Spleen (tissue), 13 donors: ENCODE measurements at regions of chr11 and their contacts with region 1.

Region 1: GRCh38 chr11:12485328-12485727 is 108.0 kb downstream of the PARVA start:
- DNase-seq: no peak
- H3K4me3 ChIP-seq: no peak overlapping the region
- H3K27ac ChIP-seq: no peak overlapping the region
- H3K4me1 ChIP-seq: no peaks in the 10 kb centered on the region
- H3K27me3 ChIP-seq: no peaks in the 10 kb centered on the region
- CTCF ChIP-seq: peak in 1 of 11 experiments; percentile 23
- POLR2A ChIP-seq: no peak

Region 2: GRCh38 chr11:11966826-11967668 is 518.3 kb before region 1 on chr11:
- intact Hi-C with region 1: no loop called
- DNase-seq: peak; percentile 86
- H3K4me3 ChIP-seq: no peak overlapping the region
- H3K27ac ChIP-seq: no peak overlapping the region
- H3K4me1 ChIP-seq: no peaks in the 10 kb centered on the region
- H3K27me3 ChIP-seq: peaks cover 0 to 10% (median 0%) of the 10 kb centered on the region in 7 donors
- CTCF ChIP-seq: peak in 10 of 11 experiments; percentile 26 to 85 (median 72)
- POLR2A ChIP-seq: no peak

Region 3: GRCh38 chr11:12377824-12378593 is 107.3 kb before region 1 on chr11:
- intact Hi-C with region 1: no loop called
- DNase-seq: no peak
- H3K4me3 ChIP-seq: peak overlapping the region; percentile 12 to 67 (median 38)
- H3K27ac ChIP-seq: peak overlapping the region; percentile 63 to 90 (median 86)
- H3K4me1 ChIP-seq: peaks cover 0 to 14% (median 3%) of the 10 kb centered on the region in 6 donors
- H3K27me3 ChIP-seq: peaks cover 0 to 46% (median 7%) of the 10 kb centered on the region in 7 donors
- CTCF ChIP-seq: peak in 2 of 11 experiments; percentile 21 to 34
- POLR2A ChIP-seq: no peak

Region 4: DNA sequence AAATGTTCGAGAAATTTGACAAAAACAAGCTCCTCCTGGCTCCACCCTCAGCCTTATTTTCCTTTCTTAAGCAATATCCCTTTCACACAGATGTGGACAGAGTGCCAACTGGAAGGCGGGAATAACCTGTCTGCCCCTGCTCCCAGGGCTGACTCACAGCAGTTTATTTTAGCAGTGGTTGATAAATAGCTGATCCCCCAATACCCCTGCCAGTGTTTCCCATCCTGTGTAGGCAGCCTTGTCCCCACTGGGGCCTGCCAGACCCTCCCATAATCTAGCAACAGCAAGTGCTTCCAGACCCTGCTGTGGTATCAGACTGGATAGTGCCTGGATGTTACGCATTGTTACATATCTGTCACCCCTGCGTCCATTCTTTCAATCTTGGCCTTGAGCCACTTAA is 54.4 kb before region 1 on chr11:
- intact Hi-C with region 1: loop called (anchors 10 kb)
- DNase-seq: no peak
- H3K4me3 ChIP-seq: no peak overlapping the region
- H3K27ac ChIP-seq: peak overlapping the region in 1 of 8 donors; percentile 13
- H3K4me1 ChIP-seq: peaks cover 0 to 14% (median 0%) of the 10 kb centered on the region in 6 donors
- H3K27me3 ChIP-seq: no peaks in the 10 kb centered on the region
- CTCF ChIP-seq: no peak
- POLR2A ChIP-seq: no peak

Region 5: GRCh38 chr11:12813371-12814225 is 328.3 kb after region 1 on chr11:
- intact Hi-C with region 1: no loop called
- DNase-seq: no peak
- H3K4me3 ChIP-seq: no peak overlapping the region
- H3K27ac ChIP-seq: peak overlapping the region in 7 of 8 donors; percentile 49 to 66 (median 61)
- H3K4me1 ChIP-seq: peaks cover 0 to 45% (median 26%) of the 10 kb centered on the region in 6 donors
- H3K27me3 ChIP-seq: peaks cover 0 to 18% (median 0%) of the 10 kb centered on the region in 7 donors
- CTCF ChIP-seq: no peak
- POLR2A ChIP-seq: no peak